IMR-90 (cell line): ENCODE measurements at regions of chr6 and their contacts with region 1.

Region 1: DNA sequence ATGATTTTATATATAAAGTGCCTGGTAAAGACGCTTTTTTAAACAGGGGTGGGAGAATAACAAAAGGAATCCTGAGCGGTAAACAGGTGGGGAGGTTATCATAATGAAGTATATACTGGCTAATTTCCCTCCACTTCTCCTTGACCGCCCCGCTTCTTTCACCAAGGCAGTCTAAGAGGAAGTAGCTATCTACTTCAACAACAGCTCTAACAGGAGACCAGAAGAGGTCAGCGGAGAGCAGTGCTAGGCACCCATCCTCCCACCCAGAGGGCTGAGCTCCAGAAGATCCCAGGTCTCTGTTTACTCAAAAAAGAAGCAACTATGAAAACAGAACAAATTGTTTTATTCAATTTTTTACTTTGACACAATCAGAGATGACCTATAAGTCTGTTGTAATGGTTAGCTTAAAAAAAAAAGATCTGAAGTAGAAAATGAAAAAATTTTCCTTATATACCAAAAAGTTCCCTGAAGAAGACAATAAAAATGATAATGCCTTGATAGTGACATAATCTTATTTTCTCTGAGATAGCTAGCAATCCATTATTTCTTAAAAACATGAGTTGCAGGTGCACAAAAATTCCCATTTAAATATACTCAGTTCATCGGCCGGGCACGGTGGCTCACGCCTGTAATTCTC is 141.1 kb downstream of the PDSS2 start:
- DNase-seq: peak; percentile 63
- ATAC-seq: peak; percentile 99
- H3K4me3 ChIP-seq: no peak overlapping the region
- H3K27ac ChIP-seq: no peak overlapping the region
- H3K4me1 ChIP-seq: peaks cover 1% of the 10 kb centered on the region; the same call in 1 of the 2 replicates
- H3K27me3 ChIP-seq: no peaks in the 10 kb centered on the region
- CTCF ChIP-seq: peak; percentile 72
- POLR2A ChIP-seq: no peak
- RAD21 ChIP-seq: peak; percentile 77

Region 2: DNA sequence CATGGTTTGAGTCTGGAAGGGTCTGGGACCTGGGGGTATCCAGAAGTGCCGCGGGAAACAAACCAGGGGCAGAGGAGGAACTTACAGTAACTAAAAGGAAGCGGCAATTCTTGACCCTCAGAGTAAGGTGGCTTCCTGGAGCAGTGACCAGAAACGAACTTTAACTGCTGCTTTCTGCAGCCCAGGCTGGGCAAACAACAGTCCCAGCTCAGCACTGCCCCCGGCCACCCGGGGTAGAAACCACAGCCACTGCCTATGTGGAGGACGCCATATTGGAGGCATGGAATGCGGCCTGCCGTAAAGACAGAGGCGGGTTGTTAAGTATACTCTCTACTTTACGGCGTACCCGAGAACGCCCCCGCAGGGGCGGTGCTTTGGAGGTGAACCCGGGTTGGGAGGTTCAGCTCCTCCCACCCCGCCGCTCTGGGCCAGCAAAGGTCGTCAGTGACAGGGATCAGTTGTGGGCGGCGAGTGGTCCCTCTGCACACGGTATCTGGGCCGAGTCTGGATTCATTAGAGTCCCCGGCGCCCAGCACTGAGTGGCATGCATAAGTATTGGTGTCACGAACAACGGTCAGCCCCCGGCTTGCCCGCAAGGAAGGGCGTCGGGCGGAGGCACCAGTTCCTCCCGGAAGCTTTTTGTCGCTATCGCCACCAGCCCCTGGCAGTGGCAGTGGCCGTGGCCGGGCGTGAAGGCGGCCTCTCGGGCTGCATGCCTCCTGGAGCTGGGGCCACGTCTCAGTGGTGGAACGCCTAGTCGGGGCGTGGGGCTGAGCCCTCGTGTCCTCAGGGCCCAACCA is 141.3 kb after region 1 on chr6 and contains the start of gene PDSS2:
- CTCF ChIA-PET with region 1: interaction called, 23 read pairs
- POLR2A ChIA-PET with region 1: no interaction called
- dilution Hi-C with region 1: no loop called
- in situ Hi-C with region 1: no loop called
- intact Hi-C with region 1: loop called (anchors 2 kb)
- DNase-seq: peak; percentile 95
- ATAC-seq: peak; percentile 99
- H3K4me3 ChIP-seq: peak within 1 kb of the TSS; percentile 85
- H3K27ac ChIP-seq: peak within 1 kb of the TSS; percentile 76
- H3K4me1 ChIP-seq: 0 out of 2 replicates have a peak, but pooled peaks cover 2% of the 10 kb centered on the region
- H3K27me3 ChIP-seq: no peaks in the 10 kb centered on the region
- CTCF ChIP-seq: peak; percentile 63
- POLR2A ChIP-seq: peak; percentile 58; the same call in 1 of the 2 replicates
- RAD21 ChIP-seq: peak; percentile 50
- total RNA-seq, gene PDSS2: 8.6 and 8.9 TPM in 2 replicates

Region 3: GRCh38 chr6:107657755-107658461 is 339.7 kb after region 1 on chr6:
- CTCF ChIA-PET with region 1: interaction called, 4 read pairs
- POLR2A ChIA-PET with region 1: no interaction called
- dilution Hi-C with region 1: no loop called
- in situ Hi-C with region 1: no loop called
- intact Hi-C with region 1: loop called (anchors 2 kb)
- DNase-seq: peak; percentile 86
- ATAC-seq: peak; percentile 90
- H3K4me3 ChIP-seq: peak overlapping the region; percentile 4; the same call in 1 of the 2 replicates
- H3K27ac ChIP-seq: peak overlapping the region; percentile 79
- H3K4me1 ChIP-seq: peaks cover 27% of the 10 kb centered on the region
- H3K27me3 ChIP-seq: no peaks in the 10 kb centered on the region
- CTCF ChIP-seq: peak; percentile 48
- POLR2A ChIP-seq: no peak
- RAD21 ChIP-seq: peak; percentile 43

Region 4: DNA sequence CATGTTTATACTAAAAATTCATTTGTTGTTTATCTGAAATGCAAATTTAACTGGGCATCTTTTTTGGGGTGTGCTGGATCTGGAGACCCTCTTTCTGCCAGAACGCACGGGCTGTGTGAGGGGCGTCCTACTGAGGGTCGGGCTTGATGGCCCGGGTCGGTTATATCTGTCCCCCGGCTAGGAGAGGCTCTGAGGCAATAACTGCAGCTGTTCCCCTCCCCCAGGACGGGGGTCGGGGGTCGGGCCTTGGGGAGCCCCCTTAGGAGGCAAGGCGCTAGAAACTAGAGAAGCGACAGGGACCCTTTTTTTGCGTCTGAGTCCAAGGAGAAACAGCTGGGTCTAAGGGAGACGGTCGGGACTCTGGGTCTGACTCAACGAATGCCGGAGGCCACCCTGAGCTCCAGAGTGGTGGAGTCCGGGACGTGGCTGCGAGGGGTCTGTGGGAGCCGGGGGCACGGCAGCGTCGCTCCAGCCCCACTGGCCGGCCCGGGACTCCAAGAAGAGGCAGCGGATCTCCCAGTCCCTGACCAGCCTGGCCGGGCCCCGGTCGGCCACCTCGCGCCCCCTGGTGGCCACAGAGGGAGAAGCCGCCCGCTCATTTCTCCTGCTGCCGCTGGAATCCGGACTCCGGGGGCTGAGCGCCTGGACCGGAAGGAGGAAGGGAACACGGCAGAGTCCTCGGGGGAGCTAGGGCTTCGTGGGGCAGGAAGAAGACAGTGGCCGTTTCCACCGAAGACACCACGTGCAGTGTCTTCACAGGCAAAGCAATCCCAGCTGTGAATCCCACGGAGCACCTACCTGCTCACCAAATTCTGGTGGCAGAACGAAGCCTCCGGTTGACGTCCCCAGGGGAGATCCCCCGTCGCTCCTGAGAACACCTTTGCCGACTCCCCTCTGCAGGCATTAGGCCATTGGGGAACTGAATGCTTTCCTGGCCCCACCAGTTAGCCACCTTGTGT is 529.9 kb after region 1 on chr6:
- CTCF ChIA-PET with region 1: no interaction called
- POLR2A ChIA-PET with region 1: no interaction called
- dilution Hi-C with region 1: no loop called
- in situ Hi-C with region 1: no loop called
- intact Hi-C with region 1: loop called (anchors 10 kb)
- DNase-seq: peak; percentile 63
- ATAC-seq: peak; percentile 100
- H3K4me3 ChIP-seq: peak overlapping the region; percentile 47
- H3K27ac ChIP-seq: no peak overlapping the region
- H3K4me1 ChIP-seq: no peaks in the 10 kb centered on the region
- H3K27me3 ChIP-seq: peaks cover 7% of the 10 kb centered on the region
- CTCF ChIP-seq: peak; percentile 93
- POLR2A ChIP-seq: no peak
- RAD21 ChIP-seq: peak; percentile 79